CD4-positive, alpha-beta T cell (primary cell): ENCODE measurements at regions of chr7 and their contacts with region 1.

Region 1: GRCh38 chr7:28020302-28020940 is 160.2 kb downstream of the JAZF1 start:
- DNase-seq: peak in 11 of 14 experiments; percentile 3 to 76 (median 15)
- ATAC-seq: peak; percentile 76
- H3K4me3 ChIP-seq: no peak overlapping the region
- H3K4me3 Mint-ChIP-seq: no peak overlapping the region
- H3K27ac ChIP-seq: no peak overlapping the region
- H3K27ac Mint-ChIP-seq: no peak overlapping the region
- H3K4me1 ChIP-seq: peaks cover 6% of the 10 kb centered on the region
- H3K4me1 Mint-ChIP-seq: peaks cover 9% of the 10 kb centered on the region
- H3K27me3 ChIP-seq: no peaks in the 10 kb centered on the region
- H3K27me3 Mint-ChIP-seq: no peaks in the 10 kb centered on the region
- CTCF ChIP-seq: peak; percentile 88

Region 2: DNA sequence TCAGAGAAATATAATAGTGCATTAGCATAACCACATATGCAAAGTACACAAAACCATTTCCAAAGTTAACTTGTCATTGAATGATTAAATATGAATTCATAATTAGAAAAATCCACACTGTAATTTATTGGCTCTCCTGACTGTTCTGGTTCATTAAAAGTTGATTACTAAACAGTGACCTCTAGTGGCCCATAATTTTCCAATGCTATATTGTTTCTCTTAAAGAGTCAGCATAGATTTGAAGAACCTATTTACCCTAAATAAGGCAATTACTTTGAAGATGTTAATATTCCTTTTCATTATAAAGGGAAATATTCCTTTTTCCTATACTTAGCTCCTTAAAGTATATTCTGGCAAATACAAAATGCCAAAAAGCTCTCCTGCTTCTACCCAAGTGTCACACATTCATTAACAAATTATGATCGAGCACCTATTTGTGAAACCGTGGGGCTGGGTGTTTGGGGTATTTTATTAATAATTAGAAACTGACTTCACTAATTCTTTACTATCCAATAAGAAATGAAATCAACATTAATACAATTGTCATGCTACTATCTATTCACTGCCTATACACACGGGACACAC is 444.0 kb before region 1 on chr7:
- CTCF ChIA-PET with region 1: no interaction called
- POLR2A ChIA-PET with region 1: no interaction called
- intact Hi-C with region 1: loop called in 1 of 2 experiments (anchors 5 kb)
- DNase-seq: peak in 3 of 14 experiments; percentile 34 to 53 (median 43)
- ATAC-seq: no peak
- H3K4me3 ChIP-seq: no peak overlapping the region
- H3K4me3 Mint-ChIP-seq: no peak overlapping the region
- H3K27ac ChIP-seq: no peak overlapping the region
- H3K27ac Mint-ChIP-seq: no peak overlapping the region
- H3K4me1 ChIP-seq: no peaks in the 10 kb centered on the region
- H3K4me1 Mint-ChIP-seq: no peaks in the 10 kb centered on the region
- H3K27me3 ChIP-seq: no peaks in the 10 kb centered on the region
- H3K27me3 Mint-ChIP-seq: no peaks in the 10 kb centered on the region
- CTCF ChIP-seq: peak; percentile 69

Region 3: DNA sequence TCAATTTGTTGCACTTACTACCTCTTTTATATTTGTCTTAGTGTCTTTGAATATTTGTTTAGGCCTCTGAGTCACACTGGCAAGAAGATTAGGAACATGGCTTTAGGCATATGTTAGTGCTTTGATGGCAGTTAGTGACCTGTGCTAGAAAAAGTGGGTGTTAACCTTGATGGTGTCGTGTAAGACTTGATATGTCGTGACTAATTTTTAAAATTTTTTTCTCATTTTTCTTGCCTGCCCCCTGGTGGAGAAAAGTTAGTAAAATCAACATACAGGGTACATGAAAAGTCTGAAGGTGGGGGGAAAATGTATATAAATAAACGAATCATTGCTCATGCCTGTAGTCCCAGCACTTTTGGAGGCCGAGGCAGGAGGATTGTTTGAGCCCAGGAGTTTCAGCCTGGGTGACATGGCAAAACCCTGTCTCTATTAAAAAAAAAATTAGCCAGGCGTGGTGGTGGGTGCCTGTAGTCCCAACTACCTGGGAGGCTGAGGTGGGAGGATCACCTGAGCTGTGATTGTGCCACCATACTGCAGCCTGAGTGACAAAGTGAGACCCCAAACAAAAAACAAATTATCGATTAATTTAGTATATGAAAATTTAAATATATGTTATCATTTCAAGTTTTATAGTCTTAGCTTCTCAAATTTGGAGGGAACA is 235.9 kb before region 1 on chr7:
- CTCF ChIA-PET with region 1: no interaction called
- POLR2A ChIA-PET with region 1: no interaction called
- intact Hi-C with region 1: loop called in 1 of 2 experiments (anchors 5 kb)
- DNase-seq: peak in 5 of 14 experiments; percentile 1 to 71 (median 55)
- ATAC-seq: peak; percentile 63
- H3K4me3 ChIP-seq: no peak overlapping the region
- H3K4me3 Mint-ChIP-seq: no peak overlapping the region
- H3K27ac ChIP-seq: no peak overlapping the region
- H3K27ac Mint-ChIP-seq: no peak overlapping the region
- H3K4me1 ChIP-seq: no peaks in the 10 kb centered on the region
- H3K4me1 Mint-ChIP-seq: peaks cover 17% of the 10 kb centered on the region
- H3K27me3 ChIP-seq: no peaks in the 10 kb centered on the region
- H3K27me3 Mint-ChIP-seq: no peaks in the 10 kb centered on the region
- CTCF ChIP-seq: peak; percentile 73

Region 4: DNA sequence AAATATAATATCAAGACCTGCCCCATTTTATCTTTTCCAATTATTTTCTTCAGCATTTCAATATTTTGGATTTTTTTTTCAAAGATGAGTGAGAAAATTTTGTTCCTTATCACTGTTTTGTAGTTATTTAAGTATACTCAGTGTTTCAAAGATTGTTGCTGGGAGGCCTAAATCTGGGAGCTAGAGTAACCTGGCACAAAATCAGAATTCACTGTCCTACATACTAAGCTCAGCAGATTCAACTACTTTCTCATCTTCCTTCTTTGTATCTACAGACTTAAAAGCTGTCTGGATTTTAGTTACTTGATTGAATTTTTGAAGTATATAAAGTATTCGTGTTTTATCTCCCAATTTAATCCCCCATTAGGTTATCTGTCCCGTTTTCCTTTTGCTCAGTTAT is 194.5 kb before region 1 on chr7:
- CTCF ChIA-PET with region 1: no interaction called
- POLR2A ChIA-PET with region 1: no interaction called
- intact Hi-C with region 1: loop called in 1 of 2 experiments (anchors 10 kb)
- DNase-seq: no peak
- ATAC-seq: no peak
- H3K4me3 ChIP-seq: no peak overlapping the region
- H3K4me3 Mint-ChIP-seq: no peak overlapping the region
- H3K27ac ChIP-seq: no peak overlapping the region
- H3K27ac Mint-ChIP-seq: no peak overlapping the region
- H3K4me1 ChIP-seq: no peaks in the 10 kb centered on the region
- H3K4me1 Mint-ChIP-seq: no peaks in the 10 kb centered on the region
- H3K27me3 ChIP-seq: no peaks in the 10 kb centered on the region
- H3K27me3 Mint-ChIP-seq: no peaks in the 10 kb centered on the region
- CTCF ChIP-seq: no peak